Activated CD8-positive, alpha-beta memory T cell treated with anti-CD3 and anti-CD28 coated beads, Interleukin-2, amount 10 ng/mL, durations not matched to agents 7 days and 5 days (primary cell): ENCODE measurements at regions of chr3 and their contacts with region 1.

Region 1: DNA sequence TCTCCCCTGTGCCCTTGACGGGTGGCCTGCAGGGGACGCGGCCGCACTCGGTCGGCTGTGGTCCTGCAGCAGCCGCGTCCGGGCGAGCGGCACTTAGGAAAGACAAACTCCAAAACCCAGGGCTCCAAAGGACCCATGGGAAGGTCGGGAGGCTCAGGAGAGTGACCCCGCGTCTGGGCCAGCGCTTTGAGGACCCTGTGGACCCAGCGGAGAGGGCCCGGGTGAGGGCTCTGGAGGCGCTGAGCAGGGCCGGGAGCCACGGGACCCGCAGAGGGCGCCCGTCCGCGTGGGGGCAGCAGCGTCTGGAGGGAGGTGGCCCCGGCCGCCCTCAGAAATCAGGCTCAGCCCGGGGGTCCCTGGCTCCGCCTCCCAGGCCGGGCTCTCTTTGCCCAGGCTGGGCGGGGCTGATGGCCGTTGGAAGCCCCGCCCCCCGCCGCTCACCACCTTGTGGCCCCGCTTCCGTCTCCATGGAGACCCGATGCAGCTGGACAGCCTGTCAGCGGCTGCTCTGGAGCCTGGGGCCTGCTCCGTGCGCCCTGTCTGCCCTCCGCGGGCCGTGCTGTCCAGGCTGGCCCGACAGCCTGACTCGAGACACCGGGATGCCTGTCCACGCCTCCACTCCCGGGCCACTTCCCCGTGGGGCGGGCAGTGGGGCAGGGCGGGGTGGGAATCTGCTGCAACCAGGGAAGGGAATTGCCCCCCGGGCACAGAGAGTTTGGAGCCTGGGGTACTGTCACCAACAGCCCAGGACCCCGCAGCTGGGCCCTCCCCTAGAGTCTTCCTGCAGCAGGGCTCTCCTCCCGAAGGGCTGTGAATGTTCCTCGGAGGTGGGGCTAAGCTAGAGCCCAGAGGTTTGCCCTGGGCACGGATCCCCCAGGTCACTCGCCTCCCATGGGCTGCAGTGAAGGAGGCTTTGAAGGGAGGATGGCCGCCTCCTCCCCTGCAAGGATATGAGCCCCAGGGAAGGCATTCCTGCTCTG is 34.8 kb upstream of the RPL32 start:
- DNase-seq: no peak
- ATAC-seq: peak; percentile 49
- H3K4me3 Mint-ChIP-seq: no peak overlapping the region
- H3K27ac Mint-ChIP-seq: no peak overlapping the region
- H3K4me1 Mint-ChIP-seq: peaks cover 3% of the 10 kb centered on the region
- H3K27me3 Mint-ChIP-seq: peaks cover 19% of the 10 kb centered on the region

Region 2: DNA sequence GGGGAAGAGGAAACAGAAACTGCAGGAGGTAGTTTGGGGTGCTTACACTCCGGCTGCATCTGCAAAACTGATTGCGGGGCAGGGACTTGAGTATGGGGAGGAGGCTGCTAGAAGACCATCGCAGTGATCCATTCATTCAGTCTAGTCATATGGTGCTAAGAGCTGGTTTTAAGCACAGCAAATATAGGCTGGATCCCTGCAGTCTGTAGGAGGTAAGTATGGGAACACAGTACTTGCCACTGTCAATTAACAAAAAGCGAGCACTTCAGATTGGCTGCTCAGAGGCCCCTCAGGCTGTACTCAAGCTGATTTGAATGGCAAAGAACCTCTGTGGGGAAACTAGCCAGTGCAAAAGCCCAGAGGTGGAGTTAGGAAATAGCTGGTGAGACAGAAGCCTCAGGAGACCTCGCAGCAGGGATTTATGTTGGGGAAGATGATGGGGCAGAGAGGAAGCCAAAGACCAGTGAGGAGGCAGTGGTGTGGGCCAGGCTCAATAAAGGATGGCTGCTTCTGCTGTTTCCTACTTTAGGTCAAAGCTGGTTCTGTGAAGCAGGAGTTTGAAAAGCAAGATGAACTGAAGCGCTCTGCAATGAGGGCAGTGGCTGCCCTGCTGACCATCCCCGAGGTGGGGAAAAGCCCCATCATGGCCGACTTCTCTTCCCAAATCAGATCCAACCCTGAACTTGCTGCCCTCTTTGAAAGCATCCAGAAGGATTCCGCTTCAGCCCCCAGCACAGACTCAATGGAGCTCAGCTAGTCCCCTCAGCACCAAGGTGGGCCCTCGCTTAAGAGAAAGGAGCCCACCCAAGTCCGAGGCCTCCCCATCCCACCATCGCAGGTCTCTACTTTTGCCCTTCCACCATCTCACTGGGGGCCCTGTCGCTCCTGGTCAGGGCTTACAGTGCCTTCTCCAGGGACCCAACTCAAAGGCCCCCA is 42.7 kb before region 1 on chr3:
- CTCF ChIA-PET with region 1: no interaction called
- DNase-seq: no peak
- ATAC-seq: no peak
- H3K4me3 Mint-ChIP-seq: no peak overlapping the region
- H3K27ac Mint-ChIP-seq: peak overlapping the region; percentile 17
- H3K4me1 Mint-ChIP-seq: peaks cover 25% of the 10 kb centered on the region
- H3K27me3 Mint-ChIP-seq: no peaks in the 10 kb centered on the region

Region 3: GRCh38 chr3:12886106-12886679 is 10.0 kb after region 1 on chr3:
- CTCF ChIA-PET with region 1: interaction called, 88 read pairs
- DNase-seq: no peak
- ATAC-seq: peak; percentile 36
- H3K4me3 Mint-ChIP-seq: no peak overlapping the region
- H3K27ac Mint-ChIP-seq: no peak overlapping the region
- H3K4me1 Mint-ChIP-seq: peaks cover 12% of the 10 kb centered on the region
- H3K27me3 Mint-ChIP-seq: peaks cover 72% of the 10 kb centered on the region

Region 4: GRCh38 chr3:12891985-12892839 is 16.1 kb after region 1 on chr3:
- CTCF ChIA-PET with region 1: interaction called, 88 read pairs
- DNase-seq: peak; percentile 56
- ATAC-seq: peak; percentile 59
- H3K4me3 Mint-ChIP-seq: no peak overlapping the region
- H3K27ac Mint-ChIP-seq: no peak overlapping the region
- H3K4me1 Mint-ChIP-seq: peaks cover 14% of the 10 kb centered on the region
- H3K27me3 Mint-ChIP-seq: peaks cover 45% of the 10 kb centered on the region